ENCODE measurements at regions of chr9 and their contacts with region 1.

Region 1: DNA sequence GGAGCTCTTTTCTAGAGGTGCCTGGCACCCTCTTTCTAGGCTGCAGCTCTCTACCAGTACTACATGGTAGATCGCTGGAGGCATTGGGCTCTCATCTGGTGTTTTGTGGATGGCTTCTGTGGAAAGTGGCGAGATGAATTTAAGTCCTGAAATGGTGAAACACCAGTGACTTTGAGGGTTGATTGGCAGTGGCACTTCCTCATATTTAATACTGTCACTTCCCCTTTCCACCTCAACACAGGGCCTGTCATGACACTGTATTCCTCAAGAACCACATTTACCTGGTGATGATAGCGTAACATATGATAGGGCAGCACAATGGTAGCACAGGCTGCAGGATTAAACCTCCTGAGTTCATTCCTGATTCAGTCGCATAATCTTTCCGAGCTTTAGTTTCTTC is 132.1 kb downstream of the KDM4C start:
- DNase-seq: no peak
- H3K4me3 ChIP-seq: no peak overlapping the region
- H3K27ac ChIP-seq: no peak overlapping the region
- H3K4me1 ChIP-seq: no peaks in the 10 kb centered on the region
- H3K27me3 ChIP-seq: no peaks in the 10 kb centered on the region
- CTCF ChIP-seq: no peak
- EP300 ChIP-seq: no peak
- POLR2A ChIP-seq: no peak

Region 2: DNA sequence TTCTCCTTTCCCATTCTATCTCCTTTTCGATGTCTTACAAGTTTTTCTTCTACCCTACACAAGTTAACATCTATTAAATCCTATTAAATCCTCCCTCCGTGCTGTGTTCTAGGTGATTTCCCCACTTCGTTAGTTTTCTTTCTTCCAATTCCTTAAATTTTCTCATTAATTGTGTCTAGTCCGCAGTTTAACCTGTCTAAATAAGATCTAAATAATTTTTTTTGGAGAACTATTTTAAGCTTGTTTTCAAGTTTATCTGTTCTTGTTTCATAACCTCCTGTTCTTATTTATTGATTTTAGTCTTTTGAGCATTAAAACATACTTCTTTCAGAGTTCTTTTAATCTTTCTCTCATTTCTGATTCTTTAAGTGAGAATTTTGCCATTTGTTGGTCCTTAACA is 367.6 kb before region 1 on chr9:
- in situ Hi-C with region 1: no loop called
- intact Hi-C with region 1: loop called (anchors 5 kb)
- DNase-seq: no peak
- H3K4me3 ChIP-seq: no peak overlapping the region
- H3K27ac ChIP-seq: no peak overlapping the region
- H3K4me1 ChIP-seq: no peaks in the 10 kb centered on the region
- H3K27me3 ChIP-seq: no peaks in the 10 kb centered on the region
- CTCF ChIP-seq: no peak
- EP300 ChIP-seq: no peak
- POLR2A ChIP-seq: no peak

Region 3: GRCh38 chr9:6689893-6690674 is 199.8 kb before region 1 on chr9:
- in situ Hi-C with region 1: no loop called
- intact Hi-C with region 1: no loop called
- DNase-seq: no peak
- H3K4me3 ChIP-seq: no peak overlapping the region
- H3K27ac ChIP-seq: peak overlapping the region in 1 of 4 donors; percentile 5
- H3K4me1 ChIP-seq: no peaks in the 10 kb centered on the region
- H3K27me3 ChIP-seq: no peaks in the 10 kb centered on the region
- CTCF ChIP-seq: no peak
- EP300 ChIP-seq: no peak
- POLR2A ChIP-seq: no peak

Region 4: DNA sequence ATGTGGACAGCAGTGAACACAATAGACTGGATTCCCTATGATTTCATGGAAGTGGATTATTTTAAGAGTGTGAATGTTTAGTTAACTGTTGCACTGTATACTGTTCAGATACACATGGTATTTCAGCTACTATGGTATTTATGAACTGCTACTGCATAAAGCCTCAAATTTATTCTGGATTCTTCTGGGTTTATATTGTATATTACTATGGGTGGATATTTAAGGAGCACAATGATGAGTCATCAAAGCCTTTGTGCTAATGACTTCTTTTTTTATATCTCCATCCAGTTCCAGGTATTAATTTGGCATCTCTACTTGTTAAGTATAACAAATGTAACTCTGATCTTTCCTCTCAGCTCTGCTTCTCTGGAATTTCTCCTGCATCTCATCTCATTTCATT is 125.3 kb before region 1 on chr9:
- in situ Hi-C with region 1: no loop called
- intact Hi-C with region 1: no loop called
- DNase-seq: no peak
- H3K4me3 ChIP-seq: no peak overlapping the region
- H3K27ac ChIP-seq: no peak overlapping the region
- H3K4me1 ChIP-seq: peaks cover 0 to 30% (median 7%) of the 10 kb centered on the region in 4 donors
- H3K27me3 ChIP-seq: no peaks in the 10 kb centered on the region
- CTCF ChIP-seq: no peak
- EP300 ChIP-seq: no peak
- POLR2A ChIP-seq: no peak

Region 5: DNA sequence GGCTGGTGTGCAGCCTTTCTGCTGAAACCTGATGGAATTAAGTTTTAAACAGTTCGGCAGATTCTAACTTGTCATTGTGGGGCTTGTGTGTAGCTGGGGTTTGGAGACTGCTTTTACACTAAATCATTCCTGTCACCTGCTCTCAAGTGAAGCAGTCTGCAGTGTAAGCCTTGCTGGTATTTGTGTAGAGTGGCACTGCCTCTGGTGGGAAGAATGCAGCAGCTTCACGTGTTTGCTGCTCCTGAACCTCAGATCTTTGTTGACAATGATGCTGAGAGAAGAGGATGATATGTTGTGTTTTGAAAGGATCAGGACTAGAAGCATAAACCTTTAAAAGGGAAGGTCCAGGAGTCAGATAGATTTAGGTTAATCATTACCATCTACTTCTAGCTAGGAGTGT is 44.0 kb before region 1 on chr9:
- in situ Hi-C with region 1: no loop called
- intact Hi-C with region 1: no loop called
- DNase-seq: no peak
- H3K4me3 ChIP-seq: no peak overlapping the region
- H3K27ac ChIP-seq: no peak overlapping the region
- H3K4me1 ChIP-seq: no peaks in the 10 kb centered on the region
- H3K27me3 ChIP-seq: no peaks in the 10 kb centered on the region
- CTCF ChIP-seq: peak in 2 of 5 experiments; percentile 20 to 22
- EP300 ChIP-seq: no peak
- POLR2A ChIP-seq: no peak